Dorsolateral prefrontal cortex (tissue), 120 donors: ENCODE measurements at regions of chrX and their contacts with region 1.

Region 1: DNA sequence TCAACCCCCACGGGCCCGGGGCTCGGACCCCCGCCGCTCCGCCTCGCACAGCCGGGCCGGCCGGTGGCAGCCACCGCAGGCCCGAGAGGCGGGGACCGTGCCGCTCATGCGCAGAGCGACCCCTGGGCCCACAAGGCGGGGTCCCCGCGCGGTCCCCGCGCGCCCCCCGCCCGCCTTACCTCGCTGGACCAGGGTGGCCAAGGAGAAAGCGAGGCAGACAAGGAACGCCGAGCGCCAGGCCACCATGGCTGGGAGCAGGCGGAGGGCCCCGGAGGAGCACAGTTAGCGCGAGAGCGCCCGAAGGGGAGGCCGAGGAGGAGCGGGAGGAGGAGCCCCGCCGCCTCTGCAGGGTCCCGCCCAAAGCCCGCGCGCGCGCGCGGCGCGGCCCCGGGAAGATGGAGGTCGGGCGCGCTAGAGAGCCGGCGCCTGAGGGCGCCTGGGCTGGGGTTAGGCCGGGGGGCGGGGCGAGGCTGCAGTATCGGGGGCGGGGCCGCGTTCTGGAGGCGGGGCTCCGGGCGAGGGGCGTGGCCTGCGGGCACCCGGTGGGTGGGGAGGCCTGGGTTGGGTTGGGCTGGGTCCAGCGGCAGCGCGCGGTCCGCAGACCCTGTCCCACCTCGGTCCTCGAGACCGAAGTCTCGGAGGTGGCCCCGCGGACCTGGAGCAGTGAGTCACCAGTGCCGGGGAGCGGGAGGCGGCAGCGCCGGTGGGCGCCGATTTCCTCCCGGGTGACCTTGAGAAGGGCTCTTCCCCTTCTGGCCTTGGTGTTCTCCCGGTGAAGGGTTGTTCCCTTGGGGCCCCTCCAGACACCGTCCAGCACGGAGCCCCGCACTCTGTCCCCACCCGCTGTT is at the start of gene CD99L2:
- DNase-seq: peak; percentile 72 to 88 (median 83)
- H3K4me3 ChIP-seq: peak within 1 kb of the TSS; percentile 41 to 77 (median 67)
- H3K27ac ChIP-seq: peak within 1 kb of the TSS in 58 of 59 donors; percentile 23 to 91 (median 77)
- H3K27me3 ChIP-seq: peaks cover 0 to 49% (median 6%) of the 10 kb centered on the region in 45 donors
- CTCF ChIP-seq: peak in 2 of 56 donors; percentile 5 to 19
- total RNA-seq, gene CD99L2: 118 to 308 (median 235) TPM

Region 2: GRCh38 chrX:150772150-150772970 is 126.2 kb before region 1 on chrX:
- intact Hi-C with region 1: loop called (anchors 1 to 5 kb)
- DNase-seq: peak; percentile 70 to 86 (median 74)
- H3K4me3 ChIP-seq: no peak overlapping the region
- H3K27ac ChIP-seq: peak overlapping the region in 3 of 59 donors; percentile 8 to 36 (median 11)
- H3K27me3 ChIP-seq: peaks cover 0 to 70% (median 7%) of the 10 kb centered on the region in 45 donors
- CTCF ChIP-seq: peak; percentile 42 to 87 (median 74)

Region 3: DNA sequence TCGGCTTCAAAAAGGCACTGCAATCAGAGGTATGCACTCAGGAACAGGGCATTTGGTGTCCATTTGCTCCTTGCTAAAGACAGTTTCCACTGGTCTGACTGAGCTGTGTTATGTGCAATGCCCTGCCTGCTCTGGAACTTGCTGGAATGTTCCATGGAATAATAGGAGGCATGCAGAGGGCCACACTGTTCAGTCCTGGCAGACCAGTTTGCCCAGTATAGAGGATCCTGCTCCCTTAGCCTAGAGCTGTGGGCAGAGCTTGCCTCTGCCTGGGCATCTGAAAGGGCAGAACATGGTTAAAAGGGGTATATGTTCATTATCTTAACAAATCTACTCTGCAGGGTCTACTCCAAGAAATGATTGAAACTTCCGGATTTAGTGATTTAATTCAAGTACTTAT is 27.7 kb after region 1 on chrX:
- intact Hi-C with region 1: no loop called
- DNase-seq: no peak
- H3K4me3 ChIP-seq: no peak overlapping the region
- H3K27ac ChIP-seq: no peak overlapping the region
- H3K27me3 ChIP-seq: peaks cover 0 to 63% (median 13%) of the 10 kb centered on the region in 45 donors
- CTCF ChIP-seq: no peak

Region 4: DNA sequence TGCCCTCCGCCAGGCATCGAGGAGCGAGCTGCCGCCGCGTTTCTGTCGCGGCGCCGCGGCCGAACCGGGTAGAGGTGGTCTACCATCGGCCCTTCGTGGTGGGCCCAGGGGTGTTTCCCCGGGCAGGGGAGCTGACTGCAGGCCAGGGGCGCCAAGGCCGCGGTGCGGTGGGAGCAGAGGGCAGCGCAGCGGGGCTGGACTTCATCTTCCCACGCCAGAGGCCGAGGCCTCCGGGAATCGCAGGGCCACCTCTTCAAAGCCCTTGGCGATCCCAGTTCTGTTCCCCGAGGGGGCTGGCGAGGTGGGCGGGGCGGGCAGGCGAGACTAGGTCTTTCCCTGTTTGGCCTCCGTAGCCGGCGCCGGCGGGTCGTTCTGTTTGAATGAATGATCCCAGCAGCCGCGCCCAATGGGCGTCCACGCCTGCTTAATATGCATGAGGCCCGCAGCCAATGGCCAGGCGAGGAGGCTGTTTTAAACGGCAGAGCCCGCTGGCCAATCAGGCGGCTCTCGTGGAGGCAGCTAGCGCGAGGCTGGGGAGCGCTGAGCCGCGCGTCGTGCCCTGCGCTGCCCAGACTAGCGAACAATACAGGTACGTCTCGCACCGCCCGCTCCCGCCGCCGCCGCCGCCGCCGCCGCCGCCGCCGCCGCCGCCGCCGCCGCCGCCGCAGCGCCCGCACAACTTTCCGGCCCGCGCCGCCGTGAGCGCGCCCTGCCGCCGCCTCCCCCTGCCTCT is 84.4 kb after region 1 on chrX and contains the start of gene HMGB3:
- intact Hi-C with region 1: loop called (anchors 5 kb)
- DNase-seq: peak; percentile 59 to 91 (median 84)
- H3K4me3 ChIP-seq: peak within 1 kb of the TSS; percentile 30 to 69 (median 54)
- H3K27ac ChIP-seq: no peak within 1 kb of the TSS
- H3K27me3 ChIP-seq: peaks cover 0 to 19% (median 0%) of the 10 kb centered on the region in 45 donors
- CTCF ChIP-seq: no peak
- total RNA-seq, gene HMGB3: 5.9 to 33.1 (median 18.5) TPM

Region 5: DNA sequence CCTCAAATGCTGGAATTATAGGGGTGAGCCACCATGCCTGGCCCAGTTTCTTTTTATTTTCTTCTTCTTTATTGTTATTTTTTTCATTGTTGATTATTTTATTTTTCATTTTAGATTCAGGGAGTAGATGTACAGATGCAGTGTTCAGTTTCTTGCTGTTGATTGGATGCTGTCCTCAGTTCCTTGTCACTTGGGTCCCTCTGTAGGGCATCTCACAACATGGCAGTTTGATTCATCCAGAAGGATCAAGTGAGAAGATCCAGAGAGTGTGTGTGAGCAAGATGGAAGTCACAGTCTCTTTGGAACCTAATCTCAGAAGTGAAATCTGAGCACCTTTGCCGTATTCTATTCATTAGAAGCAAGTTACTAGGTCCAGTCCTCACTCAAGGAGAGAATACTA is 105.5 kb after region 1 on chrX:
- intact Hi-C with region 1: no loop called
- DNase-seq: no peak
- H3K4me3 ChIP-seq: no peak overlapping the region
- H3K27ac ChIP-seq: no peak overlapping the region
- H3K27me3 ChIP-seq: peaks cover 0 to 57% (median 11%) of the 10 kb centered on the region in 45 donors
- CTCF ChIP-seq: peak in 29 of 56 donors; percentile 11 to 49 (median 32)

Region 6: DNA sequence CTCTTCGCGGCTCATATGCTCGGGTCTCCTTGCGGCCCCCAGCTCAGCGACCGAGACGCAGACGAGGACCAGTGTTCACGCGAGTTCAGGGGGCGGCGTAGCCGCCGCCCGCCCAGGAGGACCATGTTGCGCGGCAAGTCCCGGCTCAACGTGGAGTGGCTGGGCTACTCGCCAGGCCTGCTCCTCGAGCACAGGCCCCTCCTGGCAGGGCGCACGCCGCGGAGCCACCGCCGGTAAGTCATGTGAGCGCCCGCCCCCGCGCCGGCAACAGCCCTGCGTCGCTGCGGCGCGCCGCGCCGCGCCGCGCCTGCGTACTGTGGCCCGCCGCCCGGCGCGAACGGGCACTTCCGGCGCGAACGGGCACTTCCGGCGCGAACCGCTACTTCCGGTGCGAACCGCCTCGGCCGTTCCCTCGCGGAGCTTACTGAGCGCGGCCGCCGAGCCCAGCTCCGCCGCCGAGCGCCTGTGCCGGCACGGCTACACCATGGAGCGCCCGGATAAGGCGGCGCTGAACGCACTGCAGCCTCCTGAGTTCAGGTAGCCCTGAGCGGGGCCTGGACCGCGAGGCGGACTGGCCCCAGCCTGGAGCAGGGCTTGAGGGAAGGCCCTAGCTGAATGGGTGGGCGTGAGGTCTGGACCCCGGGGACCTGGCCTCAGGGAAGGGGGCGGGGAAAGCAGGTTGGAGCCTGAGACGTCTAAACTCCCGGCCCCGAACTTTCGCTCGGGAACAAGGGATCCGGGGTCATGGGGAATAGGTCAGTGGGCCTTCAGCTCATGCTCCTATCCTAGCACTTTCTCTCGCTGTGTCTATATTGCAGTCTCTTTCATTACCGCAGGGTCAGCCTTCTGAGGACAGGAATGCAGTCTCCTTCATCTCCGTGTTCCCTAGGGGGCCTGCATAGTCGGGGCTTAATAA is 498.5 kb after region 1 on chrX and contains the start of gene VMA21:
- intact Hi-C with region 1: loop called in 1 of 2 experiments (anchors 10 kb)
- DNase-seq: peak; percentile 61 to 87 (median 78)
- H3K4me3 ChIP-seq: peak within 1 kb of the TSS; percentile 32 to 88 (median 76)
- H3K27ac ChIP-seq: peak within 1 kb of the TSS in 58 of 59 donors; percentile 29 to 94 (median 84)
- H3K27me3 ChIP-seq: peaks cover 0 to 16% (median 0%) of the 10 kb centered on the region in 45 donors
- CTCF ChIP-seq: peak in 2 of 56 donors; percentile 10 to 29
- total RNA-seq, gene VMA21: 19.6 to 44.8 (median 33.2) TPM